CD4-positive, alpha-beta memory T cell (primary cell): ENCODE measurements at regions of chr9 and their contacts with region 1.

Region 1: DNA sequence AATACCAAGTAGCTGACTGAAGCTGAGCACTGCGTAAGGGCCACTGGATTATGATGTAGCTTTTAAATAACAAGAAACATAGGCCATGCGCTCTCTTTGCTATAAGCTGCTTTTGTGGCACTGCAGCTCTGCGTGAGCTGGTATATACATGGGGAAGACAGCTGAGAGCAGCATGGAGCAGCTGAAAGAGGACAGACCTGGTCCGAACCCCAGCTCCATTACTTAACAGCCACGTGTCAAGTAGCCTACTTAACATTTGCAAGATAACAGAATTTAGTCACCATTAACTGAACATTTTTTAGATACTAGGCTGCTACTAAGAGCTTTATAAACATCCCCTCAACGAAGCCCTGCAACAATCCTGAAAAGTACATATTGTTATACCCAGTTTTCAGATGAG is 69.3 kb downstream of the PTPN3 start:
- DNase-seq: no peak
- H3K4me3 ChIP-seq: no peak overlapping the region
- H3K4me3 Mint-ChIP-seq: no peak overlapping the region
- H3K27ac ChIP-seq: no peak overlapping the region
- H3K27ac Mint-ChIP-seq: no peak overlapping the region
- H3K4me1 ChIP-seq: no peaks in the 10 kb centered on the region
- H3K4me1 Mint-ChIP-seq: no peaks in the 10 kb centered on the region
- H3K27me3 ChIP-seq: no peaks in the 10 kb centered on the region
- H3K27me3 Mint-ChIP-seq: peaks cover 2% of the 10 kb centered on the region in 2 donors

Region 2: GRCh38 chr9:108162664-108163063 is 1266.2 kb before region 1 on chr9:
- CTCF ChIA-PET with region 1: no interaction called
- POLR2A ChIA-PET with region 1: no interaction called
- intact Hi-C with region 1: no loop called
- DNase-seq: no peak
- H3K4me3 ChIP-seq: no peak overlapping the region
- H3K4me3 Mint-ChIP-seq: no peak overlapping the region
- H3K27ac ChIP-seq: no peak overlapping the region
- H3K27ac Mint-ChIP-seq: no peak overlapping the region
- H3K4me1 ChIP-seq: no peaks in the 10 kb centered on the region
- H3K4me1 Mint-ChIP-seq: no peaks in the 10 kb centered on the region
- H3K27me3 ChIP-seq: no peaks in the 10 kb centered on the region
- H3K27me3 Mint-ChIP-seq: no peaks in the 10 kb centered on the region

Region 3: DNA sequence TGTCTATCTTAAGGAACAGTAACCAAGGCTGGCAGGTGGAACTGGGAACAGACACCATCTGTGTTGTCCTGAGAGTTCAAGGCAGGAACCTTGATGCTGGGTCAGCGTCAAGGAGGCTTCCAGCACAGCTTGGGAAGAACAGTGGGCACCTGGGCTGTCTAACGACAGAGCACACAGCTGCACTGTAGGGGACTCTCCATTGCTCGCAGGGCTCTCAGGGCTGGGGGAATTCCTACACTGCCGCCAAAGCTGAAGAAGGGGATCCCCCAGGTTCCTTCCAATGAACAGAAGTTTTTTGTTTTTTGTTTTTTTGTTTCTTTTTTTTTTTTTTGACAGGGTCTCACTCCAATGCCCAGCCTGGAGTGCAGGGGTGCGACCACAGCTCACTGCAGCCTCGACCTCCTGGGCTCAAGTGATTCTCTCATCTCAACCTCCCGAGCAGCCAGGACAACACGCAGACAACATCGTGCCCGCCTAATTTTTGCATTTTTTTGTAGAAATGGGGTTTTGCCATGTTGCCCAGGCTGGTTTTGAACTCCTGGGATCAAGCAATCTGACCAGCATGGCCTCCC is 12.6 kb before region 1 on chr9:
- CTCF ChIA-PET with region 1: no interaction called
- POLR2A ChIA-PET with region 1: no interaction called
- intact Hi-C with region 1: loop called (anchors 1 kb)
- DNase-seq: no peak
- H3K4me3 ChIP-seq: no peak overlapping the region
- H3K4me3 Mint-ChIP-seq: no peak overlapping the region
- H3K27ac ChIP-seq: no peak overlapping the region
- H3K27ac Mint-ChIP-seq: no peak overlapping the region
- H3K4me1 ChIP-seq: no peaks in the 10 kb centered on the region
- H3K4me1 Mint-ChIP-seq: peaks cover 0 to 5% (median 3%) of the 10 kb centered on the region in 4 donors
- H3K27me3 ChIP-seq: peaks cover 3% of the 10 kb centered on the region
- H3K27me3 Mint-ChIP-seq: peaks cover 15 to 18% of the 10 kb centered on the region in 2 donors